ENCODE measurements at regions of chr12 and their contacts with region 1.

Region 1: GRCh38 chr12:52879394-52880351 is 25.2 kb downstream of the KRT8 start:
- DNase-seq: no peak
- H3K4me3 ChIP-seq: peak overlapping the region; percentile 12 to 57 (median 34)
- H3K27ac ChIP-seq: peak overlapping the region; percentile 93 to 99 (median 97)
- H3K4me1 ChIP-seq: peaks cover 39 to 60% (median 41%) of the 10 kb centered on the region in 3 donors
- H3K27me3 ChIP-seq: peaks cover 0 to 8% (median 0%) of the 10 kb centered on the region in 4 donors
- CTCF ChIP-seq: peak; percentile 58 to 93 (median 86)
- POLR2A ChIP-seq: no peak

Region 2: DNA sequence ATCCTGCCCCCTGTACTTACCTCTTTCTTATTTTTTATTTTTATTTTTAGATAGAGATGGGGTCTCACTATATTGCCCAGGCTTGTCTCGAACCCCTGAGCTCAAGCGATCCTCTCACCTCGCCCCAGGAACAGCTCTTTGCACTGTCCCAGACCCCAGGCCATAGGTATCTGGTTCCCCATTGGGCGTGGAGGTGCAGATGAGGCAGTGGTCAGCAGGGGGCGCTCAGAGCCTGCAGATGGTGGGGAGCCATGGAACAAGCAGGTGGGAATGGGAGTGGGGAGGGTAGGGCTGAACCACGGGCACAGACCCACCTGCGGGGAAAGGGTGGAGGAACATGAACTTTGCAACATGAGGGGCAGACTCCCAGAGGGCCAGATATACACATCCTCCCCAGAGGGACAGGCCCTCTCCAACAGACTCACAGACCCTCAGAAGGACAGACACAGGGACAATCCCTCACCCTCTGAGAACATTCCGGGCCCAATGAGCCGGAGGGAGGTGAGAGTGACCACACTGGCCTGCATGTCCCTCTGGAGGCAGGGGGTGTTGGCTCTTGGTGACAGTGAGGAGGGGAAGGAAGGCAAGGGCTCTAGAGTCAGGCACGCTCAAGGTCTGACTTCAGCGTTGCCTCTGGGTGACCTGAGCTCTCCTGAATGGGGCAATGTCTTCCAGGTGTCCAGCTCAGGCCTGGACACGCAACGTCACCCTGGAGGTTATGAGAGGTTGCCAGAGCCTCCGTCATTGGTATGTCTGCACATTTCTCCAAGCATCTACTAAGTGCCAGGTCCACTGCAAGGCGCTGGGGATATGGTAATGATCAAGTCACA is 722.7 kb before region 1 on chr12:
- intact Hi-C with region 1: loop called (anchors 5 kb)
- DNase-seq: no peak
- H3K4me3 ChIP-seq: no peak overlapping the region
- H3K27ac ChIP-seq: peak overlapping the region in 3 of 4 donors; percentile 79 to 100 (median 99)
- H3K4me1 ChIP-seq: peaks cover 33 to 55% (median 36%) of the 10 kb centered on the region in 3 donors
- H3K27me3 ChIP-seq: peaks cover 0 to 10% (median 0%) of the 10 kb centered on the region in 4 donors
- CTCF ChIP-seq: peak; percentile 54 to 96 (median 95)
- POLR2A ChIP-seq: no peak

Region 3: DNA sequence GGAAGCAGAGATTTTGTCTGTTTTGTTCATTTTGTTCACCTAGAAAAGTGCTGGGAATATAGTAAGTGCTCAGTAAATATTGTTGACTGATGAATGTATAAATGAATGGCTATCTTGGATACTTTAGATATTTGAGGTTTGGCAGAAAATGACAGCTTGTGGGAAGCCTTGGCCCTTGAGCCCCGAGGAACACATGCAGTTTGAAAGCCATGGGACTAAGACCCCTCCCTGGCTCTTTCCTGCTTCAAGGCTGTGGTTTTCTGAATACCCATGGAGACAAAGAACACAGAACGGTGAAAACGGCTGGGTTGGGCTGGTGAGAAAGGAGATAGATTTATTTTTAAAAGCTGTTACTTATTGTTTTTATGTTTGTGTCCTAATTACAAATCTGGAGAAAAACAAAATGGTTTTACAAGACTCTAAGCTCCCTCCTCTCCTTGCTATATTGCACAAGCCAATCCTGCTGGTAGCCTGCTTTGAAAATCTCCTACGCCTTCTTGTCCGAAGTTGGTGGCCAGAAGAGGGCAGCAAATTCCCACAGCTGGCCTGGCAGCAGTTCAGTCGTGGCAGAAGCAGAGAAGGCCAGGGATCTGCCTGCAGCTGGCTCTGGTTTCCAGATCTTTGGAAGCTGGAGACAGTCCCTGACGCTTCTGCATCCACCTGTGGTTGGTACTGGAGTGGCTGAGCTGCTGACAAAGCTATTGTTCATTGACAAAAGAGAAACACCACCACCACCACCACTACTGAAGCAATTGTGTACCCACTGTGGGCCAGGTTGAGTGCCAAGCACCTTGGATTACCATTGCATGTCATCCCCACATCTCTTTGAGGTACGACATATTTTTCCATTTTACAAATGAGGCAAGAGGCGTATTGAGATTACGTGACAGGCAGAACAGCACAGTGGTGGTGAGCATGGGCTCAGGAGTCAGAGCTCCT is 507.2 kb before region 1 on chr12:
- intact Hi-C with region 1: loop called (anchors 2 kb)
- DNase-seq: no peak
- H3K4me3 ChIP-seq: no peak overlapping the region
- H3K27ac ChIP-seq: peak overlapping the region; percentile 5 to 86 (median 72)
- H3K4me1 ChIP-seq: peaks cover 6 to 27% (median 20%) of the 10 kb centered on the region in 3 donors
- H3K27me3 ChIP-seq: peaks cover 0 to 12% (median 0%) of the 10 kb centered on the region in 4 donors
- CTCF ChIP-seq: peak; percentile 45 to 92 (median 84)
- POLR2A ChIP-seq: no peak

Region 4: DNA sequence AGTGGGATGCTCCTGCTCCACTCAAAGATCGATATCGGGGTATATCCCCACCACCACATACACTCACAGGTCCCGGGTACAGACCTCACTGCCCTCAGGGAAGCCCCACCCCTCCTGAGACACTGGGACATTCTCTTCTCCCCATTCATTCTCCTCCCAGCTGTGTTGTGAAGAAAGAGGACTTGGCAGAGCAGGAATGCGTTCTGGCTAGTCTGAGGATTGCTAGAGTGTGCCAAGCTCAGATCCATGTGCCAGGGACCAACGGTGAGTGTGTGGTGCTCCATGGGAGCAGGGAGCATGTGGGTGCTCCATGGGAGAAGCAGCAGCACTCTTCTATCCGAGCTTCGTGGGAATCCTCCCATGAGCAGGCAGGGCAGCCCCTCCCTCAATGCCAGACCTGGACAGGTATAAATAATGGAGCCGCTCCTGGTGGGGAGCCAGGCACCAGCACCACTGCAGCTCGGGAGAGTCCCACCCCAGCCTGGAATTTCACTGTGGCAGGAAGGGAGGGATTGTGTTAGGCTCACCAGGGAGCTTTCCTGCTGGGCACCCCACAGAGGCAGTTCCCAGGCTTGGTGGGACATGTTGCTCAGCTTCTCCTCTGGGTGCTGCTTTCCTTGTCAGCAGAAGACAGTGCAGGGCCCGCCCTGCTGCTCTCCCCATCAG is 357.2 kb before region 1 on chr12:
- intact Hi-C with region 1: loop called (anchors 10 kb)
- DNase-seq: no peak
- H3K4me3 ChIP-seq: peak overlapping the region in 2 of 4 donors; percentile 50 to 51
- H3K27ac ChIP-seq: peak overlapping the region; percentile 89 to 94 (median 91)
- H3K4me1 ChIP-seq: peaks cover 29 to 79% (median 36%) of the 10 kb centered on the region in 3 donors
- H3K27me3 ChIP-seq: peaks cover 0 to 5% (median 0%) of the 10 kb centered on the region in 4 donors
- CTCF ChIP-seq: no peak
- POLR2A ChIP-seq: peak in 1 of 4 donors; percentile 20

Region 5: GRCh38 chr12:52582971-52583456 is 296.7 kb before region 1 on chr12:
- intact Hi-C with region 1: loop called (anchors 5 kb)
- DNase-seq: no peak
- H3K4me3 ChIP-seq: no peak overlapping the region
- H3K27ac ChIP-seq: peak overlapping the region; percentile 74 to 83 (median 77)
- H3K4me1 ChIP-seq: peaks cover 25 to 53% (median 27%) of the 10 kb centered on the region in 3 donors
- H3K27me3 ChIP-seq: no peaks in the 10 kb centered on the region
- CTCF ChIP-seq: peak in 5 of 6 experiments; percentile 52 to 87 (median 80)
- POLR2A ChIP-seq: no peak

Region 6: DNA sequence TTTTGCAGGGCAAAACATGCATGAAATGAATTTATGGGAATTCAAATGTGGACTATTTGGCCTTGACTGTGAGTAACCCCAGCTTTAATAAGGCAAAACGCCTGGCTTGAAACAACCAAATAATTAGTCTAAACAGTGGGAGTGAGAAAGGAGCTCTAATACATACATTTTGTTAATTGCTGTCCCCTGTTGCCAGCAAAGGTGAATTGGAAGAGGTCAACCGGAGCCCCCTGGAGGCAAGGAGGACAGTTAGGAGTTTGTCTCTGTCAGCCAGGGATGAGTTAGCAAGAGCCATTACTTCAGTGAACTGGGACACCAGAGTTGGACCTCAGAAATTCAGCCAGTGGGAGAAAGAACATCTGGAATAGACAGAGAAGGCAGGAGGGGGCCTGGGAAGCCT is 120.0 kb before region 1 on chr12:
- intact Hi-C with region 1: no loop called
- DNase-seq: no peak
- H3K4me3 ChIP-seq: no peak overlapping the region
- H3K27ac ChIP-seq: no peak overlapping the region
- H3K4me1 ChIP-seq: no peaks in the 10 kb centered on the region
- H3K27me3 ChIP-seq: peaks cover 0 to 43% (median 0%) of the 10 kb centered on the region in 4 donors
- CTCF ChIP-seq: no peak
- POLR2A ChIP-seq: no peak

Region 7: GRCh38 chr12:53391729-53392128 is 512.1 kb after region 1 on chr12:
- intact Hi-C with region 1: no loop called
- DNase-seq: no peak
- H3K4me3 ChIP-seq: no peak overlapping the region
- H3K27ac ChIP-seq: peak overlapping the region; percentile 35 to 100 (median 61)
- H3K4me1 ChIP-seq: peaks cover 35 to 74% (median 45%) of the 10 kb centered on the region in 3 donors
- H3K27me3 ChIP-seq: no peaks in the 10 kb centered on the region
- CTCF ChIP-seq: no peak
- POLR2A ChIP-seq: no peak